ENCODE measurements at regions of chr18 and their contacts with region 1.

Region 1: DNA sequence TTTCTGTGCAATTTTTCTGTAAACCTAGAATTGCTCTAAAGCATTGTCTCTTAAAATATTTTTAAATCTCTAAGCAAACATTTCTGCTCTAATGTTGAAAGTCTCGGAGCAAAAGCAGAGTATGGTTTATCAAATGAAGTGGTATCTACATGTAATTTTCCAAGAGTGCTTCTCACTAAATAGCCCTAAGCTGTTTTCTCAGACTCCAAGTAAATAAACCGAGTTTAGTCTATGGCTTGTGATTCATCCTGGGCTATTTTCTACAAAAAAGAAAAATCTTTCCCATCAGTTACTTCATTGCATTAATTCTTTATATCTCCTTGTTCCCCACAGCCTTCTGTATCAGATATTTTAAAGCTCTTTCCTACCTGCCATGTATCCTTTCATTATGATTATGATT is 90.7 kb downstream of the METTL4 start:
- DNase-seq: no peak
- ATAC-seq: no peak
- H3K4me3 ChIP-seq: no peak overlapping the region
- H3K27ac ChIP-seq: no peak overlapping the region
- H3K4me1 ChIP-seq: no peaks in the 10 kb centered on the region
- H3K27me3 ChIP-seq: no peaks in the 10 kb centered on the region
- CTCF ChIP-seq: no peak
- POLR2A ChIP-seq: no peak
- RAD21 ChIP-seq: no peak

Region 2: DNA sequence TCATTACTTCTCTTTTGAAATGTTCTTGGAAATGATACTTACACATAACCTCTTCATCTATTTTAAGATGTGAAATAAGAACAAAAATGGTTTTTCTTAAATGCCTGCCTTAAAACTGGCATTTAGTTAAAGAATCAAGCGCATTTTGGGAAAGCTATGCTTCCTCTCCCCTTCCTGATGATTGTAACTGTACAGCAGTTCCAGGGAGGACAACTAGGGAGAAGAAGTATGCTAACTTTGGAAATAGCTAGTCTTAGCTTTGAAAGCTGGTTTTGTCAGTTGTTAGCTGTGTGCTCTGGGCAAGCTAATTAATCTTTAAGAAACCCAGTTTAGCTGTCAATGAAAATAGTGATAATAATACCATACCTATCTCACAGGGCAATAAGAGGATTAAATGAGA is 1584.3 kb before region 1 on chr18:
- CTCF ChIA-PET with region 1: no interaction called
- POLR2A ChIA-PET with region 1: no interaction called
- RAD21 ChIA-PET with region 1: no interaction called
- intact Hi-C with region 1: loop called (anchors 5 kb)
- DNase-seq: no peak
- ATAC-seq: no peak
- H3K4me3 ChIP-seq: no peak overlapping the region
- H3K27ac ChIP-seq: no peak overlapping the region
- H3K4me1 ChIP-seq: no peaks in the 10 kb centered on the region
- H3K27me3 ChIP-seq: peaks cover 15% of the 10 kb centered on the region; the same call in 1 of the 2 replicates
- CTCF ChIP-seq: no peak
- POLR2A ChIP-seq: no peak
- RAD21 ChIP-seq: no peak

Region 3: GRCh38 chr18:1779587-1779986 is 701.0 kb before region 1 on chr18:
- CTCF ChIA-PET with region 1: no interaction called
- POLR2A ChIA-PET with region 1: no interaction called
- RAD21 ChIA-PET with region 1: no interaction called
- intact Hi-C with region 1: no loop called
- DNase-seq: no peak
- ATAC-seq: no peak
- H3K4me3 ChIP-seq: no peak overlapping the region
- H3K27ac ChIP-seq: no peak overlapping the region
- H3K4me1 ChIP-seq: no peaks in the 10 kb centered on the region
- H3K27me3 ChIP-seq: peaks cover 15% of the 10 kb centered on the region
- CTCF ChIP-seq: no peak
- POLR2A ChIP-seq: no peak
- RAD21 ChIP-seq: no peak

Region 4: GRCh38 chr18:2494921-2495320 is 14.3 kb after region 1 on chr18:
- CTCF ChIA-PET with region 1: no interaction called
- POLR2A ChIA-PET with region 1: no interaction called
- RAD21 ChIA-PET with region 1: no interaction called
- intact Hi-C with region 1: no loop called
- DNase-seq: no peak
- ATAC-seq: no peak
- H3K4me3 ChIP-seq: no peak overlapping the region
- H3K27ac ChIP-seq: no peak overlapping the region
- H3K4me1 ChIP-seq: 0 out of 4 replicates have a peak, but pooled peaks cover 0 to 5% of the 10 kb centered on the region in 2 experiments
- H3K27me3 ChIP-seq: no peaks in the 10 kb centered on the region
- CTCF ChIP-seq: no peak
- POLR2A ChIP-seq: no peak
- RAD21 ChIP-seq: no peak